ENCODE measurements at regions of chr3 and their contacts with region 1.

Region 1: GRCh38 chr3:61420136-61420759 is 141.1 kb upstream of the PTPRG start:
- DNase-seq: no peak
- H3K4me3 Mint-ChIP-seq: no peak overlapping the region
- H3K27ac Mint-ChIP-seq: peak overlapping the region; percentile 20
- H3K4me1 Mint-ChIP-seq: peaks cover 12% of the 10 kb centered on the region
- H3K27me3 Mint-ChIP-seq: peaks cover 3% of the 10 kb centered on the region

Region 2: GRCh38 chr3:61530355-61530754 is 110.1 kb after region 1 on chr3:
- intact Hi-C with region 1: loop called (anchors 5 kb)
- DNase-seq: no peak
- H3K4me3 Mint-ChIP-seq: no peak overlapping the region
- H3K27ac Mint-ChIP-seq: no peak overlapping the region
- H3K4me1 Mint-ChIP-seq: peaks cover 7% of the 10 kb centered on the region
- H3K27me3 Mint-ChIP-seq: no peaks in the 10 kb centered on the region